ENCODE measurements at regions of chr1 and their contacts with region 1.

Region 1: GRCh38 chr1:25675729-25676476 is 59.3 kb downstream of the MAN1C1 start:
- DNase-seq: peak; percentile 96
- H3K4me3 Mint-ChIP-seq: peak overlapping the region; percentile 59
- H3K27ac Mint-ChIP-seq: peak overlapping the region; percentile 69
- H3K4me1 Mint-ChIP-seq: peaks cover 71% of the 10 kb centered on the region
- H3K27me3 Mint-ChIP-seq: peaks cover 15% of the 10 kb centered on the region

Region 2: DNA sequence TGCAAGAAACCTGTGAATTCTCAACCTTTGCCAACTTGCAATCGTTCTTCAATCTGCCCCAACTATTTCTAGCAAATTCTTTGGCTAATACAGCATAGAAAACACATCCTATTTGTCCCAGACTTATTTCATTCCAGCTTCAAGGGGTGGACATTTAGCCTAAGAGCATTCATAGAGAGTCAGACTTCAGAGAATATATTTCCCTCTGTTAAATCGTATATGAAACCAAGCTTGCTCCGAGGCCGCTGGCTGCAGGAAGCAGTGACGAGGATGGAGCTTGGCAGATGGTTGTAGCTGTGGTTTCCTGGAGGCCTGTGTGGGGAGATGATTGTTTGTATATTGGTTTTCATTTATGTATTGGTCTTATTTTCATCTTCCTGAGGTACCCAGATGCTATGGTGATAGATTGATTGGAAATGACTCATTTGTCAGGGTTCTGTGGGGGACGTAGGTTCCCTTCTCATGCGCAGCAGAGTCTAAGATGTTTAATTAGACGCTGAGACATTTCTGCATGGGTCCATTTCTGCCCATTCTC is 33.3 kb before region 1 on chr1:
- CTCF ChIA-PET with region 1: interaction called, 14 read pairs
- POLR2A ChIA-PET with region 1: interaction called, 7 read pairs
- intact Hi-C with region 1: loop called (anchors 1 kb)
- DNase-seq: peak; percentile 86
- H3K4me3 Mint-ChIP-seq: peak overlapping the region; percentile 45
- H3K27ac Mint-ChIP-seq: peak overlapping the region; percentile 65
- H3K4me1 Mint-ChIP-seq: peaks cover 61% of the 10 kb centered on the region
- H3K27me3 Mint-ChIP-seq: peaks cover 3% of the 10 kb centered on the region

Region 3: DNA sequence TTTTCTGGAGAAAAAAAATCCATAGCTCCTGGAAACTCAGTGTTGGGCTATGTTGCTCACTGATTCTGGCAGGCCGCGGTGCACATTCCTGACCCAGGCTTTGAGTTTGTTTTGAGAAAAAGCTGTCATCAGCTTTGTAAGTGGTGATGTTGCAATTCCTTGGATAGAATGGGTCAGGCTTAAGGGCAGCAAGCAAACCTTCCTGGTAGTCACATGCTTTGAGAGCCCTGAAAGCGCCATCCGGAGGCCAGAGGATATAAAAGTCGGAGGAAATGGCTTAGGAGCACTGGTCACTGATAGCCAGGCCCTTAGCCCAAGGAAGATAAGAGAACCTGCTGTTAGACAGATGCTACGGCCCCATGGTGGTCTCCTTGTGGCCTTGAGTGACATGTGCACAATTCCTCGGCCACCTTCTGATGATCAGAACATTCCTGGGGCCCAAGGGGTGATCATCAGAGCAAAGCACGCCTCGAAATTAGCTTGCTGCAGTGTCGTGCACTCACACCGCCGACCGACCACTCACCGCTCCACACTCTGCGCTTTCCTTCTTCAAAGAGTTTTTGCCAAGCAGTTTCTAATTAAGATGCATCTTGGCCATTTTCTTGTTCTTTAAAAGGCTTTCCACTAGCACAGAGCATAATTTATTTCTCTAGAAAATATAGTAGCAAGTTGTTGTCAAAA is 19.3 kb after region 1 on chr1:
- CTCF ChIA-PET with region 1: no interaction called
- POLR2A ChIA-PET with region 1: no interaction called
- intact Hi-C with region 1: loop called (anchors 2 kb)
- DNase-seq: no peak
- H3K4me3 Mint-ChIP-seq: no peak overlapping the region
- H3K27ac Mint-ChIP-seq: peak overlapping the region; percentile 59
- H3K4me1 Mint-ChIP-seq: peaks cover 45% of the 10 kb centered on the region
- H3K27me3 Mint-ChIP-seq: no peaks in the 10 kb centered on the region

Region 4: DNA sequence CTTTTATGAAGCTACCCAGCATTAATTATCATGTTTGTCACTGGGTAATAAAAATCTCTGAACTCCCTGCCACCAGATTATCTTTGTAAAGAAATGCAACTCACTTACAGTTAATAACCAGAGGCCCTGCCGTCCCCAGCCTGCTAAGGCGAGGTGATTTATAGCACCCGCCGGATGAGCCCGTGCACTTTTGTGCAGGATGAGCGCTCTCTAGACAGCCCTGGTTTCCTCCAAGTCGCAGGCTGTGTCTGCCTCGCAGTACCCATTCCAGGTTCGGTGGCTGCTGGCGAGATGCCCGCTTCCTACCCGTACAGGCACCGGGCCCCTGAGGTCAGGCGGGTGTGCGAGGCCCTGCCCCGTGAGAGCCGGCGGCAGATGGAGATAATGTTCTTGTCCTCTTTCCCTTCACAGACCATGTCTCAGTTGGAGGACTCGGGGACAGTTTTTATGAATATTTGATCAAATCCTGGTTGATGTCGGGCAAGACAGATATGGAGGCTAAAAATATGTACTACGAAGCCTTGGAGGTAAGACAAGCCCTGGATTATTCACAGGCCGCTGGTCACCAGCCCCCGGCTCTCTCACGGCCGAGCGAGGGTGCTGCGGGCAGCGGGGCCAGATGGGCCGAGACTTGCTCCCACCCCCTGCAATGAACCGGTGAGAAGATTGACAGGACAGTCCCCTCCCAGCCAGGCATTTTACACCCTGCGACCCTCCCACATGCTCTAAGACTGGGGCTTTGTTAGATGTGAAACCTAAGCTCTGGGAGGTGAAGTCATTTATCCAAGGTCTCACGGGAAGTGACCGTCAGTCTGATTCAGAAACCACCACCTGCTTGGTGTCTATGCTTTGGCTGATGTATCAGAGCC is 95.6 kb after region 1 on chr1:
- CTCF ChIA-PET with region 1: no interaction called
- POLR2A ChIA-PET with region 1: interaction called, 7 read pairs
- intact Hi-C with region 1: loop called (anchors 2 kb)
- DNase-seq: peak; percentile 30
- H3K4me3 Mint-ChIP-seq: no peak overlapping the region
- H3K27ac Mint-ChIP-seq: no peak overlapping the region
- H3K4me1 Mint-ChIP-seq: peaks cover 58% of the 10 kb centered on the region
- H3K27me3 Mint-ChIP-seq: no peaks in the 10 kb centered on the region

Measured in activated CD4-positive, alpha-beta memory T cell treated with anti-CD3 and anti-CD28 coated beads for 36 hours (primary cell).